Activated B cell treated with CpG ODN at 0.5 μM for 24 hours (primary cell): ENCODE measurements at regions of chr1 and their contacts with region 1.

Region 1: GRCh38 chr1:172727956-172728603 is 69.2 kb downstream of the FASLG start:
- DNase-seq: no peak
- ATAC-seq: peak; percentile 78
- H3K4me3 Mint-ChIP-seq: no peak overlapping the region
- H3K27ac Mint-ChIP-seq: no peak overlapping the region
- H3K4me1 Mint-ChIP-seq: peaks cover 14% of the 10 kb centered on the region
- H3K27me3 Mint-ChIP-seq: no peaks in the 10 kb centered on the region
- CTCF ChIP-seq: no peak

Region 2: GRCh38 chr1:172561252-172561651 is 166.8 kb before region 1 on chr1:
- CTCF ChIA-PET with region 1: no interaction called
- POLR2A ChIA-PET with region 1: no interaction called
- intact Hi-C with region 1: no loop called
- DNase-seq: no peak
- ATAC-seq: no peak
- H3K4me3 Mint-ChIP-seq: no peak overlapping the region
- H3K27ac Mint-ChIP-seq: no peak overlapping the region
- H3K4me1 Mint-ChIP-seq: peaks cover 5% of the 10 kb centered on the region
- H3K27me3 Mint-ChIP-seq: no peaks in the 10 kb centered on the region
- CTCF ChIP-seq: no peak

Region 3: GRCh38 chr1:172609528-172609927 is 118.6 kb before region 1 on chr1:
- CTCF ChIA-PET with region 1: interaction called, 15 read pairs
- POLR2A ChIA-PET with region 1: no interaction called
- intact Hi-C with region 1: no loop called
- DNase-seq: no peak
- ATAC-seq: peak; percentile 25
- H3K4me3 Mint-ChIP-seq: no peak overlapping the region
- H3K27ac Mint-ChIP-seq: no peak overlapping the region
- H3K4me1 Mint-ChIP-seq: no peaks in the 10 kb centered on the region
- H3K27me3 Mint-ChIP-seq: no peaks in the 10 kb centered on the region
- CTCF ChIP-seq: no peak

Region 4: DNA sequence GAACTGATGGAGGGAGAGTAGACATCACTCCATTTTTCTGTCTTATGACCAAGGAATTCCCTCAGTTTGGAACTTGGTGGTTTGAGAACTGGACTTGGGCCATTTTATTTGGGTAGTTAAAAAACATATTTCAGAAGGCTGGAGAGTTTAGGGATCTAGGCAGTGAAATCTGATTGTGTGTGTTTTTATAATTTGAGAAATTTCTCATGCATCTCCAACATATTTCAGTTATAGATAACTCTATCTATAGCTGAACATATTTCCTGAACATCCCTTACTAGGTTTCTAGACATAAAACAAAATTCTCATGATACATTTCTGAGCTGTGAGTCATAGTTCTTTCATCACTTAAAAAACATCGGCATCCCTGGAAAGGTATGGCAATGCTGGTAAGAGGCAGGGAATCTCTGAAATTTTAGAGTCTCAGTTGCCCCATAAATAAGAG is 33.5 kb after region 1 on chr1:
- CTCF ChIA-PET with region 1: no interaction called
- POLR2A ChIA-PET with region 1: no interaction called
- intact Hi-C with region 1: no loop called
- DNase-seq: no peak
- ATAC-seq: no peak
- H3K4me3 Mint-ChIP-seq: no peak overlapping the region
- H3K27ac Mint-ChIP-seq: no peak overlapping the region
- H3K4me1 Mint-ChIP-seq: peaks cover 35% of the 10 kb centered on the region
- H3K27me3 Mint-ChIP-seq: no peaks in the 10 kb centered on the region
- CTCF ChIP-seq: no peak